Dendritic cell treated with granulocyte-macrophage colony-stimulating factor and Interleukin-4, amounts not matched to agents 40 ng/mL and 50 ng/mL, for 4 days (primary cell): ENCODE measurements at regions of chr11 and their contacts with region 1.

Region 1: GRCh38 chr11:128733440-128734102 is 39.7 kb downstream of the FLI1 start:
- H3K4me3 Mint-ChIP-seq: peak overlapping the region; percentile 68
- H3K27ac Mint-ChIP-seq: peak overlapping the region; percentile 98
- H3K4me1 Mint-ChIP-seq: peaks cover 84% of the 10 kb centered on the region
- H3K27me3 Mint-ChIP-seq: no peaks in the 10 kb centered on the region

Region 2: DNA sequence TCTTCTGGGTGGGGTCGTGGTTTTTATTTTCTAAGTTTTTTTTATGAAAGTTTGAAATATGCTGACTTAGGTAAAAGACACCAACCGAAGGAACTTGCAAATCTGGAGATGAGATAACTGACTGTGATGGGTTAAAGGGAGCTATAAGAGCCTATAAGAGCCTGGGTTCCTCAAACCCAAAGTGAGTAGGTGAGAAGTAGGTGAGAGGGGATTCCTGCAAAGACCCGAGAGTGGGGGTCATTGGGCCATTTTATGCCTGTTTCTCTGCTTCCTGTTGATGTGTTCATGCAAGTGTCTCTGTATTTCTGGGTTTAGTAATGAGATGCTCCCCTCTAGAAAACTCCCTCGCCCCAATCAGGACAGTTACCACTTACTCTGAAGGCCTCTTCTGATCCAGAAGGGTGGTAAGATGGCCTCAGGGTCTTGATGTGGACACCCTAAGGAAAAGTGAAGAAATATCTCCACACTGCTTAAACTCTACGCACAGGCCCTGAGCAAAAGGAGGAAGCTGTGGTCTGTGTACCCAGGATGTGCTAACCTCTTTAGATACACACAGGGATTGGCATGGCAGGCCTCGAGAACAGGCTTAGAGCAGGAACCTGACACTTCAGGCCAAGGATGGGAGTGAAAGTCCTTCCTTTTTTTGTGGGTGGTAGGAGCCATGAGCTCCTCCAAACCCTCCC is 37.9 kb before region 1 on chr11:
- intact Hi-C with region 1: loop called (anchors 2 kb)
- H3K4me3 Mint-ChIP-seq: peak overlapping the region; percentile 96
- H3K27ac Mint-ChIP-seq: peak overlapping the region; percentile 93
- H3K4me1 Mint-ChIP-seq: peaks cover 75% of the 10 kb centered on the region
- H3K27me3 Mint-ChIP-seq: peaks cover 9% of the 10 kb centered on the region

Region 3: GRCh38 chr11:128718064-128718463 is 15.5 kb before region 1 on chr11:
- intact Hi-C with region 1: loop called (anchors 2 kb)
- H3K4me3 Mint-ChIP-seq: peak overlapping the region; percentile 69
- H3K27ac Mint-ChIP-seq: peak overlapping the region; percentile 97
- H3K4me1 Mint-ChIP-seq: peaks cover 97% of the 10 kb centered on the region
- H3K27me3 Mint-ChIP-seq: no peaks in the 10 kb centered on the region